Ovary (tissue), 10 donors: ENCODE measurements at regions of chr9 and their contacts with region 1.

Region 1: DNA sequence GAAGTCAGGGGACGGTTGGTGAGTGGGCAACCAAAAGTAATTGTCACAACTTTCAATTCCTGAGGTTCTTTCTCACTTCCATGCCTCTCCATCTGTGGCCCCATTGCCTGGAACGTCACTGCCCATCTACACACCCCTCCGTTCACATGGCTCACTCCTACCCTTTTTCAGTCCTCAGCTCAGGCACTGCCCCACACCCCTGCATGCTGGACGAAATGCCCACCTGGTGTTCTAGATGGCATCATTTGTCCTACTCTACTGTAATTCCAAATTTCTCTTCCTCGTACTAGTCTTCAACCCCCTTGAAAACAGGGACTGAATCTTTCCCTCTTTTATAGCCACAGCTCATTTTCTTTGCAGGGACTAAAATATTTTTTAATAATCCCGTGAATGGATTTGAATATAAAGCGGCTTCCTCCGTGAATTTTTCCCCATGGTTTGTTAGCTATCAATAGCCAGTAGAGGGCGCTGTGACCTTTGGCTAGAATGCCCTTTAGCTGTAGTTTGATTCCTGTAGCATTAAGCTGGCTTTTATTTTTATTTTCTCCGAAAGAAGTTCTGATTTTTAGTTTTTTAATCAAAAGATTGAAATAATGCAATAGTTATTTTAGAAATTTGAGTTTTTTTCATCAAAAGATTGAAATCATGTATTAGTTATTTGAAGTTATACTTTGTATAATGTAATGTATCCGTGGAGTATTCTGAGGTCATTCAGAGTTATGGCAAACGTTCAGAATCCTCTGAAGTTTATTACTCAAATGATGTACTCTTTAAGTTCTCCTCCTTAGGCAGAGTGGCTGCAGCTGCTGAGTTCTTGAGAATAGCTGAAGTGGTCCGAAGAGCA is 232.1 kb downstream of the SH3GL2 start:
- DNase-seq: peak; percentile 34 to 73 (median 50)
- H3K4me3 ChIP-seq: no peak overlapping the region
- H3K27ac ChIP-seq: no peak overlapping the region
- H3K4me1 ChIP-seq: no peaks in the 10 kb centered on the region
- H3K27me3 ChIP-seq: no peaks in the 10 kb centered on the region
- CTCF ChIP-seq: peak; percentile 67 to 81 (median 78)
- EP300 ChIP-seq: no peak
- POLR2A ChIP-seq: no peak

Region 2: DNA sequence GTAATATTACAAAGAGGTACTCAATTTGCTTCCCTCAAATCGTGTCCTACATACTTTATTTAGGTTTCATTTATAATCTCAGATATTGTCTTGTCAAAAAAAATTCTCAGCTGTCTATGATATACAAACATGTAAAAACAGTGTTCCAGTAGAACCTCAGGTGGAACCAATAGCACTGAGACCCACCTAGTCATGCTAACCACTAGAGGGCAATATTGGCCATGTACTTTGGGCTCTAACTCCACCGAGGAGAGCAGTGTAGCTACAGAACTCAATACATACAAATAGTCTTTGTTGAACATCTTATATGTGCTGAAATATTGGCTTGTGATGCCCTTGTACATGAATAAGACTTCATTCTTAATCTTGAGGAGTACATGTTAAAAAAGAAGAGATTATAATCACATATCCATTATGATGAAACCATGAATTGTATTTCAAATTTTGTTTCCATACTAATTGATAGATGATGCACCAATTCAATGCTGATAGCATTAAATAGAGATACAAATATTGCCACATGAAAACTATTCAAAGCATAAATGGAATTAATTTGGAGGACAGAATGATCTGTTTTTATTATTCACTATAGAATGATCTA is 747.3 kb before region 1 on chr9:
- intact Hi-C with region 1: no loop called
- DNase-seq: no peak
- H3K4me3 ChIP-seq: no peak overlapping the region
- H3K27ac ChIP-seq: no peak overlapping the region
- H3K4me1 ChIP-seq: no peaks in the 10 kb centered on the region
- H3K27me3 ChIP-seq: no peaks in the 10 kb centered on the region
- CTCF ChIP-seq: peak in 2 of 3 donors; percentile 22 to 36
- EP300 ChIP-seq: no peak
- POLR2A ChIP-seq: no peak

Region 3: DNA sequence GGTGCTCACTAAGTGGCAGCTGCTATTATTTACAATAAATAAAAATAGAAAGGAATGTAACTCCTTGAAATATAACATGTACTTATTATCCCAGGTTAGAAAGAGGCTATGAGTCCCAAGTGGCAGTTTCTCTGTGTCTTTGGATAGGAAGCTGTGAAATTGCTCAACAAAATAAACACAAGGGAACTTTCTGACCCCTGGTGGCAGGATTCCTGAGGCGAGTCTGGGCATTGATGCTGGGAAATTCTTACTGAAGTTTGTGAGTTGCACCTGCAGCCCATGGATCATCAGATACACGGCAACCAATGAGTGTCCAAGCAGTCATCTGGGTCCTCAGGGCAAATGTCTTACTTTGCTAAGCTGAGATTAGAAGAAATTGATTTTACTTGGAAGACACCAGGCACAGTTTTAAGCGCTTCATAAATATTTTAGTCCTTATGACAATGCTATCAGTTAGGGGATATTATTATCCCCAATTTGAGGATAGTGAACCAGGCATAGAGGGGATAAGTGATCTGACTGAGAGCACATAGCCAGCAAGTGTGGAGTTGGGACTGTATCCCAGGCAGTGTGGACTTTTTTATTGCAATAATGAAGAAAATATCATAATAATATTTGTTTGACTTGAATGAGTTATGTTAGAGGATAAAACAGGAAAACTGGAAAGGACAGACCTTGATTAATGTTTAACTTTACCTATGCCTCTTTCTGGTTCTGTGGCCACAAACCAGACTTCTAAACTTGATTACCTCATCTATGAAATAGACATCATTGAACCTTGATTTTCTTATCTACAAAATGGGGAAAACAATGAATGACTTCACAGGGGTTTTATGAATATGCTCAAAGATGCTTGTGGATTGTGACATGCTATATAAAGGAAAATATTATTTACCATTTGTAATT is 397.5 kb after region 1 on chr9:
- intact Hi-C with region 1: loop called in 3 of 4 experiments (anchors 5 kb)
- DNase-seq: peak; percentile 17 to 53 (median 29)
- H3K4me3 ChIP-seq: no peak overlapping the region
- H3K27ac ChIP-seq: no peak overlapping the region
- H3K4me1 ChIP-seq: no peaks in the 10 kb centered on the region
- H3K27me3 ChIP-seq: no peaks in the 10 kb centered on the region
- CTCF ChIP-seq: peak in 2 of 3 donors; percentile 37 to 50
- EP300 ChIP-seq: no peak
- POLR2A ChIP-seq: no peak

Region 4: GRCh38 chr9:18215626-18216025 is 404.7 kb after region 1 on chr9:
- intact Hi-C with region 1: loop called in 3 of 4 experiments (anchors 5 kb)
- DNase-seq: no peak
- H3K4me3 ChIP-seq: no peak overlapping the region
- H3K27ac ChIP-seq: no peak overlapping the region
- H3K4me1 ChIP-seq: no peaks in the 10 kb centered on the region
- H3K27me3 ChIP-seq: no peaks in the 10 kb centered on the region
- CTCF ChIP-seq: no peak
- EP300 ChIP-seq: no peak
- POLR2A ChIP-seq: no peak